Gastrocnemius medialis (tissue), 4 donors: ENCODE measurements at regions of chr9 and their contacts with region 1.

Region 1: GRCh38 chr9:92942688-92943616 is 4.4 kb upstream of the FGD3 start:
- DNase-seq: peak; percentile 70 to 85
- ATAC-seq: peak; percentile 92 to 96
- H3K4me3 ChIP-seq: no peak overlapping the region
- H3K27ac ChIP-seq: no peak overlapping the region
- H3K4me1 ChIP-seq: peaks cover 8 to 10% of the 10 kb centered on the region in 2 donors
- H3K27me3 ChIP-seq: peaks cover 0 to 5% (median 0%) of the 10 kb centered on the region in 3 donors
- CTCF ChIP-seq: no peak
- POLR2A ChIP-seq: no peak

Region 2: GRCh38 chr9:92877531-92878430 is 65.2 kb before region 1 on chr9 and contains the start of gene ZNF484:
- in situ Hi-C with region 1: no loop called
- intact Hi-C with region 1: loop called (anchors 5 kb)
- DNase-seq: peak; percentile 90 to 96
- ATAC-seq: peak; percentile 100
- H3K4me3 ChIP-seq: peak within 1 kb of the TSS; percentile 66 to 79 (median 73)
- H3K27ac ChIP-seq: peak within 1 kb of the TSS; percentile 80 to 87 (median 81)
- H3K4me1 ChIP-seq: peaks cover 9 to 14% of the 10 kb centered on the region in 2 donors
- H3K27me3 ChIP-seq: no peaks in the 10 kb centered on the region
- CTCF ChIP-seq: no peak
- POLR2A ChIP-seq: no peak
- total RNA-seq, gene ZNF484: 2.8 to 7.3 (median 4.1) TPM